Heart right ventricle (tissue), 16 donors: ENCODE measurements at regions of chr10 and their contacts with region 1.

Region 1: GRCh38 chr10:98467506-98468346 is 21.0 kb upstream of the HPS1 start:
- DNase-seq: peak; percentile 58 to 71
- ATAC-seq: peak; percentile 94 to 96 (median 95)
- H3K4me3 ChIP-seq: peak overlapping the region; percentile 21 to 66 (median 60)
- H3K27ac ChIP-seq: peak overlapping the region in 2 of 10 donors; percentile 35 to 40
- H3K4me1 ChIP-seq: peaks cover 0 to 33% (median 13%) of the 10 kb centered on the region in 9 donors
- H3K27me3 ChIP-seq: peaks cover 0 to 15% (median 0%) of the 10 kb centered on the region in 7 donors
- CTCF ChIP-seq: peak; percentile 59 to 91 (median 88)

Region 2: GRCh38 chr10:96863922-96864543 is 1603.7 kb before region 1 on chr10:
- intact Hi-C with region 1: no loop called
- DNase-seq: no peak
- ATAC-seq: peak in 5 of 8 donors; percentile 37 to 68 (median 59)
- H3K4me3 ChIP-seq: no peak overlapping the region
- H3K27ac ChIP-seq: peak overlapping the region in 1 of 10 donors; percentile 13
- H3K4me1 ChIP-seq: peaks cover 0 to 34% (median 19%) of the 10 kb centered on the region in 9 donors
- H3K27me3 ChIP-seq: no peaks in the 10 kb centered on the region
- CTCF ChIP-seq: no peak

Region 3: GRCh38 chr10:98555021-98555619 is 87.4 kb after region 1 on chr10:
- intact Hi-C with region 1: no loop called
- DNase-seq: no peak
- ATAC-seq: no peak
- H3K4me3 ChIP-seq: no peak overlapping the region
- H3K27ac ChIP-seq: no peak overlapping the region
- H3K4me1 ChIP-seq: no peaks in the 10 kb centered on the region
- H3K27me3 ChIP-seq: peaks cover 0 to 8% (median 0%) of the 10 kb centered on the region in 7 donors
- CTCF ChIP-seq: no peak

Region 4: DNA sequence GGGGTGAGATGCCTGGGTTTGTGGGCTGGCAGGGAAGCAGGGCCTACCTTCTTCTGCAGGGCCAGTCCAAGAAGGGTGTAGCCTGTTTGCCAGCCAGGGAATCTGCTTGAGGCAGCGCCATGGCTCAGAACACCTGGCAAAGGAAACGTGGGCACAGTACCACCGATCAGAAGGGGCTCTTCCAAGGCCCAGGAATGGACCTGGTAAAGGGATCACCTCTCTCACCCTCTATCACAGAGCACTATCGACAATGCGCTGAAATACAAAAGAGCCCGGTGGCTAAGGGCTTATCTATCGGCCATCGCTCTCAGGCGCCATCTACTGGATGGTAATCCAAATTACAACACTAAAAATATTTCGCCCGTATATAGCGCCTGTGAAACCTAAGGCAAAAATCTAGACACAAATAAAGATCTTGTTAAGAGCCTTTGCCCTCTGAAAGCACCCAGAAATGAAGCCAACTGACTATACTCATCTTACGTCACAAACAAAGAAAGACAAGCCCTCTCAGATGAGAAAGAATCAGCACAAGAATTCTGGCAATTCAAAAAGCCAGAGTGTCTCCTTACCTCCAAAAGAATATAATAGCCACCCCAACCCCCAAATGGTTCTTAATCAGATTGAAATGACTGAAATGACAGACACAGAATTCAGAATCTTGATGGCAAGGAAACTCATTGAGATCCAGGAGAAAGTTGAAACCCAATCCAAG is 196.8 kb after region 1 on chr10:
- intact Hi-C with region 1: loop called in 5 of 10 experiments (anchors 5 to 10 kb)
- DNase-seq: no peak
- ATAC-seq: no peak
- H3K4me3 ChIP-seq: no peak overlapping the region
- H3K27ac ChIP-seq: no peak overlapping the region
- H3K4me1 ChIP-seq: no peaks in the 10 kb centered on the region
- H3K27me3 ChIP-seq: peaks cover 0 to 4% (median 0%) of the 10 kb centered on the region in 7 donors
- CTCF ChIP-seq: peak in 8 of 9 donors; percentile 7 to 65 (median 48)

Region 5: GRCh38 chr10:99042051-99042771 is 574.5 kb after region 1 on chr10:
- intact Hi-C with region 1: loop called in 1 of 10 experiments (anchors 10 kb)
- DNase-seq: no peak
- ATAC-seq: no peak
- H3K4me3 ChIP-seq: no peak overlapping the region
- H3K27ac ChIP-seq: no peak overlapping the region
- H3K4me1 ChIP-seq: no peaks in the 10 kb centered on the region
- H3K27me3 ChIP-seq: no peaks in the 10 kb centered on the region
- CTCF ChIP-seq: no peak

Region 6: GRCh38 chr10:99172130-99172738 is 704.5 kb after region 1 on chr10:
- intact Hi-C with region 1: loop called in 3 of 10 experiments (anchors 5 kb)
- DNase-seq: no peak
- ATAC-seq: no peak
- H3K4me3 ChIP-seq: no peak overlapping the region
- H3K27ac ChIP-seq: no peak overlapping the region
- H3K4me1 ChIP-seq: no peaks in the 10 kb centered on the region
- H3K27me3 ChIP-seq: peaks cover 0 to 28% (median 7%) of the 10 kb centered on the region in 7 donors
- CTCF ChIP-seq: peak; percentile 19 to 59 (median 45)

Region 7: GRCh38 chr10:99248824-99249223 is 781.1 kb after region 1 on chr10:
- intact Hi-C with region 1: loop called (anchors 2 to 5 kb)
- DNase-seq: no peak
- ATAC-seq: no peak
- H3K4me3 ChIP-seq: no peak overlapping the region
- H3K27ac ChIP-seq: no peak overlapping the region
- H3K4me1 ChIP-seq: no peaks in the 10 kb centered on the region
- H3K27me3 ChIP-seq: peaks cover 0 to 7% (median 0%) of the 10 kb centered on the region in 7 donors
- CTCF ChIP-seq: no peak

Region 8: GRCh38 chr10:99430451-99431189 is 962.9 kb after region 1 on chr10 and contains the start of gene GOT1:
- intact Hi-C with region 1: loop called in 1 of 10 experiments (anchors 10 kb)
- DNase-seq: peak; percentile 91 to 98
- ATAC-seq: peak; percentile 95 to 97 (median 97)
- H3K4me3 ChIP-seq: peak within 1 kb of the TSS; percentile 68 to 96 (median 86)
- H3K27ac ChIP-seq: peak within 1 kb of the TSS; percentile 90 to 99 (median 96)
- H3K4me1 ChIP-seq: peaks cover 0 to 76% (median 36%) of the 10 kb centered on the region in 9 donors
- H3K27me3 ChIP-seq: no peaks in the 10 kb centered on the region
- CTCF ChIP-seq: no peak
- total RNA-seq, gene GOT1: 362 to 669 (median 586) TPM